AG04449 (cell line): ENCODE measurements at regions of chr17 and their contacts with region 1.

Region 1: DNA sequence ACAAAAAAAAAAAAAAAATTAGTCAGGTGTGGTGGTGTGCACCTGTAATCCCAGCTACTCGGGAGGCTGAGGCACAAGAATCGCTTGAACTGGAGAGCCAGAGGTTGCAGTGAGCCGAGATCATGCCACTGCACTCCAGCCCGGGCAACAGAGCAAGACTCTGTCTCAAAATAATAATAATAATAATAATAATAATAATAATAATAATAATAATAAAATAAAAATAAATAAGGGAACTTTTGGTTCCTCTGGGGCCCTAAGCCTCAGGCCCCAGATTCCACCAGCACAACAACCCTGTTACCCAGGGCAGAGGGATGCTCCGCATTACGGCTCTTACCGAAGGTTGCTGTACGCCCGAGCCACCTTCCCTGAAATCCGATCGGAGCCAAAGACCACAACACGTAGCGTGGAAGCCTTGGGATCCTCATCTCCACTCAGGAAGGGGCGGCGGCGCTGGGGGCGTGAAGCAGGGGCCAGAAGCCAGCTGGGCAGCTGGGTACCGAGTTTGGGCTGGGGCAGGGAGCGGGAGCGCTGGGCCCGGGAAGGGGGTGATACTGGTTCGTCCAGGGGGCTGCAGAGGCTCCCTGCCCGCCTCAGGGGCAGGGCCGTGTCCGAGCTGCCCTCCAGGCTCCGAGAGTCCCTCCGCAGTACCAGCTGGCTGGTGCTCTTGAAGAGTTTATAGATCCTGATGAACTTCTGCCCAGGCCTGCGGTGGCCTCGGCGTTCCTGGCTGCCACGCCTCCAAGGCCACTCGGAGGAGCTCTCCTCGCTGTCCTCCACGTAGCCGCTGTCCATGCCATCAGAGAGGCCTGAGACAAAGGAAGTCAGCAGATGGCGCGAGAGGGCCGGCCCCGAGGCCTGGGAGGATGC is 20.6 kb upstream of the PIK3R6 start:
- DNase-seq: no peak
- H3K4me3 ChIP-seq: no peak overlapping the region
- CTCF ChIP-seq: peak; percentile 46

Region 2: GRCh38 chr17:8875957-8876356 is 12.1 kb before region 1 on chr17:
- CTCF ChIA-PET with region 1: interaction called, 10 read pairs
- POLR2A ChIA-PET with region 1: no interaction called
- DNase-seq: no peak
- H3K4me3 ChIP-seq: no peak overlapping the region
- CTCF ChIP-seq: no peak

Region 3: DNA sequence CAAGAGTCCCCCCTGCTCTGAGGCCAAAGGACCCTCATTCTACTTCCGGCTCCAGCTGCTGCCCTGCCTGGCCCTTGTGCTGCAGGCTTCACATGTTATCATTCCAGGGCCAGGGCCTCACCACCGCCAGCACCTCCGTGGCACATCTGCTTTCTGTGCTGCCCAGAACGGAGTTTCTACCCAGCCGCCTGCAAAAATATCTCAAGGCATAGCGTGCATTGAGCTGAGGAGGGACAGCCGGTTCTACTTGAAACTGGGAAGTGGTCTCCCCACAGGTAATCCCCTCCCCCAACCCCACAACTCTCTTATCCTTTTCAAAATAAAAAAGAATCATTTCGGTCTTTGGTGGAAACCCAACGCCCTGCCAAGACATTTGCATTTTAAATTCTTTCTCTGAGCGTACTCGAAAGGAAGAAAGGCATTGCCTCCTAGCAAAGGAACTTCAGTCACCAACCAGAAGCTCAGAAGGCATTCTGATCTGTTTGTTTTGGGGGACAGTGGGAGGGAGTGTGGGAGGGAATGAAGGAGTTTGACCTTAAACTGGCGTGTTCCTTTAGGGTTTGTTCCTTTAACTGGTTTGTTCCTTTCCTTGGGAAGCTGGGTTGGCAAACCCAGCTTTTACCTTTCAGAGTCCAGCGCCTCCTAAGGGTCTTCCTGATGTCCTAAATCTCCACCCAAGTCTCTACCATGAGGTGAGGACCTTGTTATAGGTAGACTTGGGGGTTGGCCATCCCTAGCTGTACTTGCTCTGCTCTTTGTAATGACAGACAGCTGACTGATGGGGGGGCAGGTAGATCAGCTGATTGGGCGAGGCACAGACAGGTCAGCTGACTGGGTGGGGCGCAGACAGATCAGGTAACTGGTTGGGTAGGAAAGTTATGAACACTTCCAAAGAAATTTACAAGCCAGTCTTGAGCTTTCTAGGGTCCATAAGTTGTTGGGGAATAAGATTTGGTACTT is 12.8 kb after region 1 on chr17:
- CTCF ChIA-PET with region 1: interaction called, 10 read pairs
- POLR2A ChIA-PET with region 1: no interaction called
- DNase-seq: no peak
- H3K4me3 ChIP-seq: no peak overlapping the region
- CTCF ChIP-seq: no peak

Region 4: GRCh38 chr17:8997994-8998628 is 110.0 kb after region 1 on chr17:
- CTCF ChIA-PET with region 1: interaction called, 13 read pairs
- POLR2A ChIA-PET with region 1: no interaction called
- DNase-seq: no peak
- H3K4me3 ChIP-seq: no peak overlapping the region
- CTCF ChIP-seq: peak; percentile 77

Region 5: GRCh38 chr17:9037736-9038135 is 149.7 kb after region 1 on chr17:
- CTCF ChIA-PET with region 1: no interaction called
- POLR2A ChIA-PET with region 1: no interaction called
- DNase-seq: no peak
- H3K4me3 ChIP-seq: no peak overlapping the region
- CTCF ChIP-seq: no peak